ENCODE measurements at regions of chr4 and their contacts with region 1.

Region 1: DNA sequence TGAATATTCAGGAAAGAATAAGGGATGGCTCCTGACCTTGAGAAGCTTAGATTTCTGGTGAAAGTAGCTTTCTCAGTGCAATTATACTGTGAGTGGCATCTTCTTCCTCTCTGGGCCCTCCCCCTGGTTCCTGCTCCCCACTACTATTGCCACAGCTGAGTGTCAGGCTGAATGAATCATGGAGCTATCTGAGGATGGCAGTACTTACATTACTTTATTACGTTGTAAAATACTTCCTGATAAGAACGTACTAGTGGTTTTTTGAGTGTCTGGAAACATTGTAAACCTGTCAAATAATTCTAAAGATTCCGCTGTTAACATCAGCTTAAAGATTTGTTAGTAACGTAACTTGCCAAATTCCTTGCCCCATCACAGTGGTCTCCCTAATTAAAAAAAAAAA is 36.2 kb downstream of the ARHGAP10 start:
- DNase-seq: no peak
- H3K4me3 ChIP-seq: no peak overlapping the region
- H3K27ac ChIP-seq: no peak overlapping the region
- H3K27me3 ChIP-seq: no peaks in the 10 kb centered on the region
- CTCF ChIP-seq: no peak

Region 2: GRCh38 chr4:147755561-147756295 is 12.4 kb before region 1 on chr4:
- CTCF ChIA-PET with region 1: no interaction called
- POLR2A ChIA-PET with region 1: interaction called, 19 read pairs
- DNase-seq: peak; percentile 38
- H3K4me3 ChIP-seq: no peak overlapping the region
- H3K27ac ChIP-seq: peak overlapping the region; percentile 68
- H3K27me3 ChIP-seq: no peaks in the 10 kb centered on the region
- CTCF ChIP-seq: no peak

Measured in AG04450 (cell line).